ENCODE measurements at regions of chr3 and their contacts with region 1.

Region 1: DNA sequence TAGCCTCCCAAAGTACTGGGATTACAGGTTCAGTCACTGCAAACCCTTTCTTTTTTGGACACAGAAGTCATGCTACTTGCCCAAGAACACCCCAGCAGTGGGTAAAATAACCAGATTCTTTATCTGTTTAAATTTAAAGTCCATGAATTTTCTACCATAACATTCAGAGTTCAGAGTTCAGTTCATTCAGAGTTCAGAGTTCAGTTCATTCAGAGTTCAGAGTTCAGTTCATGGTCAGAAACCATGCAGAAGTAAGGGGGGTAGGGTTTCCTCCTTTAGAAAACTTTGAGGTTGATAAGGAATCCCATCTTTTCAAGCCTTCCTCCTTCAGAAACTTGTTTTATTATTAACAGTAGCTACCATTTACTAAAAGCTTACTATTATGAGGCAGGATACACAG is 43.2 kb downstream of the RAF1 start:
- DNase-seq: no peak
- ATAC-seq: no peak

Region 2: DNA sequence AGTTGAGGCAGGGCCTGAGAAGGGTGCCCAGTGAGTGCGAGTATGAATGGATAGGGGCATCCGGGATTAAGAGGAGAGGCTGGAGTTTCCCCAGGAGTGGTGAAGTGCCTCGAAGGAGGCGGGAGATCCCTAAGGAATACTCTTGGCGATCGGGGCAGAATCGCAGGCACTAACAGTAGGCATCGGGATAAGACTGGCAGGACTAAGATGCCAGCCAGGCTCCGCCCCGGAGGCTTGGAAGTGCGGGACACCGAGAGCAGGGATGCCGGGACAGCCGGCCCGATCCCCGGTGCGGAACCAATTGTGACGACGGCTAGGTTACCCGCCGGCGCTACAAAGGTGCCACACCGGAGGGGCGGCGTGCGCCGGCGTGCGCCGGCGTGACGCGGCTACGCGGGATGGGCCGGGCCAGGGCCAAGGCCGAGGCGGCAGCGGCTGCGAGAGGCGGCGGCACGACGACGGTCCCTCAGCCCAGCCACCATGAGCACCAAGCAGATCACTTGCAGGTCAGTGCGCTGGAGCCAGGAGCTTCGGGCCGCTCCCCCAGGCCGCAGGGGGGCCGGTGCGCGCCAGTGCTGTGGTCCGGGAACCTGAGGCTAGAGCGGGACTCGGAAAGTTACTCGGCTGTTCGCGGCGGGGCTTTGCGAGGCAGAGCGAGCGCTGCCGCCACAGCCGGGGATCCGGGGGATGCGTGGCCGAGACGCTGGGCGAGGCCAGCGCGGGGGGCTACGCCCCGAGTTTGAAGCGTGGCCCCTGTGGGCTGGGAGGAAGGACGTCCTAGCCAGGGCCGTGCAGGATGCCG is 63.9 kb before region 1 on chr3 and contains the start of gene MKRN2:
- intact Hi-C with region 1: no loop called
- DNase-seq: peak; percentile 95
- ATAC-seq: peak; percentile 97
- total RNA-seq, gene MKRN2: 31.0 TPM

Region 3: DNA sequence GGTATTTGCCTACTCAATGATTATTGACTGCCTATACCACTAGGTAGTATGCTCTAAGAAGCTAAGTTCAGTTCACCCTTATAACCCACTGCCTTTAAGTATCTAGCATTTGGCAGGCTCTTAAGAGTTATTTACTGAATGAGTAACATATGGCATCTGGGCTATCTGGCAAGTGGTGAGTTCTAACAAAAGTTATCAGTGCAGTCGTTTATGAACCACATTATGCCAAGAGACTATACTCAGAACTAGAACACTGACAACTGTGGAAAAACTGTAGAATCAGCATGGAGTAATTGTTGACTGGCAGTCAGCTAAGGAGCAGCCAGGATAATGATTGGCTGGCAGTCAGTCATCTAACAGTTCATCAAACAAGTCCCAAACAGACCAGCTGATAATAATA is 17.4 kb after region 1 on chr3:
- intact Hi-C with region 1: loop called (anchors 1 kb)
- DNase-seq: no peak
- ATAC-seq: peak; percentile 60

Measured in Right ventricle myocardium inferior (tissue), 1 donor.